Sciatic nerve (tissue), 2 donors: ENCODE measurements at regions of chr1 and their contacts with region 1.

Region 1: GRCh38 chr1:44786138-44786840 is 1.7 kb downstream of the BEST4 start:
- DNase-seq: peak; percentile 83
- ATAC-seq: peak; percentile 84

Region 2: DNA sequence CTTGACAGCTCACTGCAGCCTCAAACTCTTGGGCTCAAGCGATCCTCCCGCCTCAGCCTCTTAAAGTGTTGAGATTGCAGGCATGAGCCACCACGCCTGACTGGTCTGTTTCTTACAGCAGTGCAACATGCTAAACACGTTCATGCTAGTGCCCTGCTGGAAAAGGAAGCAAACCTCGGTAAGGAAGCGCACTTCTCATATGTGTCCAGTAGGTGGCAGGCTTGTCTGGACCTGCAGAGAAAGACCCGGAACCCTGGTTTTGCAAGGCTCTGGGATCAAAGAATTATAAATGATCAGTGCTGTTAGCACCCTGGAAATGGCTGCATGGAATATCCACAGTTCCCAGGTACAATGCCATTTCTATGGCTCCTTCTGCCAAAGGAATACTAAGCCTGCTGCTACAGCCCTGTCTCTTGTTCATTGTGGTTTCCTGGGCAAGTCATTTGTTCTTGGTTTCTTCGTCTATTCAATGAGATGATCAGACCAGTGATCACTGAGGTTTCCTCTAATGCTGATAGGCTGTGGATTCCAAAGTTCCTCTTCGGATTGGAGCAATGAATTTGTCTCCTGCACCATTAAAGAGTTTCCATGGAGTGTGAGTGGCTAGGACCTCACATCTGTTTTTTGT is 71.2 kb before region 1 on chr1:
- intact Hi-C with region 1: loop called (anchors 10 kb)
- DNase-seq: no peak
- ATAC-seq: peak; percentile 83

Region 3: DNA sequence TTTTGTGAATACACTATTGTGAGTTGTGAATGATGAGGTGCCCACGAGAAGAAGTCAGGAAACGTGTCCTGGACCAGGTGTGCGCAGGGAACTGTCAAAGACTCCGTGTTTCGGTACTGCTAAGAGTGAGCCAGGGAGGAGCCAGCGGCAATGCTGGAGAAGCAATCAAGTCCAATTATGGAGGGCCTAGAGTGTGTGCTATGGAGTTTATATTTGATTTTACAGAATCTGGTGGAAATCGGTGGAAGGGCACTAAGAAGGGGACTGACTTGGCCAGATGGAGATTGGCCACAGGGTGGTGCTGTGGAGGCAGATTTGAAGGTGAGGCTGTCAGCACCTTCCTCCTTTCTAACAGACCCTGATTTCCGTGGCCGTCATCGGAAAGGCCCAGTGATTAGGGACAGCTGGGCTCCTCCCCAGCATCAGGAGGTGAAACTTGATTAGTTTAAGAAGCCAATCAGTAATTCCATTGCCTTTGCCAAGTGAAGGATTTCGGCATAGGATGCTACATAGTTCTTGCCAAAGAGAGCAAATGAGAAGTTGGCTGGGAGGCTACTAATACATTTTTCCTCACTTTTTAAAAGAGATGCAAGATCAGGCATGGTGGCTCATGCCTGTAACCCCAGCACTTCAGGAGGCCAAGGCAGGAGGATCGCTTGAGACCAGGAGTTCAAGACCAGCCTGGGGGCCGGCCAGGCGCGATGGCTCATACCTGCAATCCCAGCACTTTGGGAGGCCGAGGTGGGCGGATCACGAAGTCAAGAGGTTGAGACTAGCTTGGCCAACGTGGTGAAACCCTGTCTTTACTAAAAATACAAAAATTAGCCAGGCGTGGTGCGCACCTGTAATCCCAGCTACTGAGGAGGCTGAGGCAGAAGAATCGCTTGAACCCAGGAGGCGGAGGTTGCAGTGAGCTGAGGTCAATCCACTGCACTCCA is 49.7 kb after region 1 on chr1:
- intact Hi-C with region 1: loop called (anchors 10 kb)
- DNase-seq: peak; percentile 95
- ATAC-seq: peak; percentile 73